Body of pancreas (tissue), 4 donors: ENCODE measurements at regions of chr1 and their contacts with region 1.

Region 1: GRCh38 chr1:219365451-219365850 is 191.8 kb downstream of the LYPLAL1 start:
- DNase-seq: no peak
- ATAC-seq: no peak
- H3K4me3 ChIP-seq: no peak overlapping the region
- H3K27ac ChIP-seq: no peak overlapping the region
- H3K4me1 ChIP-seq: no peaks in the 10 kb centered on the region
- H3K27me3 ChIP-seq: no peaks in the 10 kb centered on the region
- CTCF ChIP-seq: no peak
- POLR2A ChIP-seq: no peak

Region 2: GRCh38 chr1:219422811-219423598 is 57.6 kb after region 1 on chr1:
- intact Hi-C with region 1: loop called (anchors 10 kb)
- DNase-seq: no peak
- ATAC-seq: no peak
- H3K4me3 ChIP-seq: no peak overlapping the region
- H3K27ac ChIP-seq: no peak overlapping the region
- H3K4me1 ChIP-seq: peaks cover 7% of the 10 kb centered on the region
- H3K27me3 ChIP-seq: no peaks in the 10 kb centered on the region
- CTCF ChIP-seq: no peak
- POLR2A ChIP-seq: no peak